ENCODE measurements at regions of chr2 and their contacts with region 1.

Region 1: DNA sequence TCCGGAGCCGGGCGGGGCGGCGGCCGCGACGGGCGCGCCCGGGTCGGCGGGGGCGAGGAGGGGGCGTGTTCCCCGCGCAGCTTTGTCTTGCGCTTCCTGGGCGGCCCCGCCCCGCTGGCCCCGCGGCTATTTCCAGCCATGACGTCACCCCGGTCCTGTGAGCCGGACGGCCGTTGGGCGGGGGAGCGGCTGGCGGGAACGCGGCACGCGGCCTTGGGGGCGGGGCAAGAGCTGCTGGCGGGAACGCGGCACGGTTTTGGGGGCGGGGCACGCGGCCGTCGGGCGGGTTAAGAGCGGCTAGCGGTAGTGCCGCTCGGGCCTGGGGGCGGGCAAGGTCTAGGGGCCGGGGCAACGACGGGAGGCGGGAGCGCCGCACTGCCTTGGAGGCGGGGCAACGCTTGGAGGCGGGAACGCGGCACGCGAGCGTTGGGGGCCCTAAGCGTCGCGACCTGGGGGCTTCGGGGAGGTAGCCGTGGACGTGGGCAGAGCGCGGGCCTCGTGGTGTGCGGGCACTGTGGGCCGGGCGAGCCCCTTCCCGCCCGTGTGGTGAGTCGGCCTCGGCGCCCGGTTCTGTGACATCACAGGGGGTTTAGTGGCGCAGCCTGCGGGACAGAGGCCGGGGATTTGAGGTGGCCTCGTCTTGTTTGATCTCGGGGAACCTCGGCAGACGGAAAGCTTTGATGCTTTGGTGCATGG is 704 bp downstream of the KLF11 start:
- DNase-seq: peak; percentile 99
- ATAC-seq: peak; percentile 48 to 83 (median 78)
- H3K4me3 ChIP-seq: peak overlapping the region; percentile 38 to 93 (median 70)
- H3K27ac ChIP-seq: peak overlapping the region; percentile 93 to 100 (median 97)
- H3K4me1 ChIP-seq: peaks cover 15 to 82% (median 64%) of the 10 kb centered on the region in 12 donors
- H3K27me3 ChIP-seq: no peaks in the 10 kb centered on the region
- CTCF ChIP-seq: no peak
- POLR2A ChIP-seq: peak in 1 of 2 donors; percentile 18

Region 2: GRCh38 chr2:9799665-9800632 is 244.1 kb before region 1 on chr2:
- intact Hi-C with region 1: loop called in 1 of 10 experiments (anchors 5 kb)
- DNase-seq: peak; percentile 84 to 94 (median 88)
- ATAC-seq: peak; percentile 78 to 89 (median 80)
- H3K4me3 ChIP-seq: peak overlapping the region in 1 of 12 donors; percentile 12
- H3K27ac ChIP-seq: peak overlapping the region in 7 of 12 donors; percentile 18 to 67 (median 33)
- H3K4me1 ChIP-seq: peaks cover 0 to 52% (median 24%) of the 10 kb centered on the region in 12 donors
- H3K27me3 ChIP-seq: no peaks in the 10 kb centered on the region
- CTCF ChIP-seq: peak; percentile 92 to 99 (median 98)
- POLR2A ChIP-seq: no peak

Region 3: DNA sequence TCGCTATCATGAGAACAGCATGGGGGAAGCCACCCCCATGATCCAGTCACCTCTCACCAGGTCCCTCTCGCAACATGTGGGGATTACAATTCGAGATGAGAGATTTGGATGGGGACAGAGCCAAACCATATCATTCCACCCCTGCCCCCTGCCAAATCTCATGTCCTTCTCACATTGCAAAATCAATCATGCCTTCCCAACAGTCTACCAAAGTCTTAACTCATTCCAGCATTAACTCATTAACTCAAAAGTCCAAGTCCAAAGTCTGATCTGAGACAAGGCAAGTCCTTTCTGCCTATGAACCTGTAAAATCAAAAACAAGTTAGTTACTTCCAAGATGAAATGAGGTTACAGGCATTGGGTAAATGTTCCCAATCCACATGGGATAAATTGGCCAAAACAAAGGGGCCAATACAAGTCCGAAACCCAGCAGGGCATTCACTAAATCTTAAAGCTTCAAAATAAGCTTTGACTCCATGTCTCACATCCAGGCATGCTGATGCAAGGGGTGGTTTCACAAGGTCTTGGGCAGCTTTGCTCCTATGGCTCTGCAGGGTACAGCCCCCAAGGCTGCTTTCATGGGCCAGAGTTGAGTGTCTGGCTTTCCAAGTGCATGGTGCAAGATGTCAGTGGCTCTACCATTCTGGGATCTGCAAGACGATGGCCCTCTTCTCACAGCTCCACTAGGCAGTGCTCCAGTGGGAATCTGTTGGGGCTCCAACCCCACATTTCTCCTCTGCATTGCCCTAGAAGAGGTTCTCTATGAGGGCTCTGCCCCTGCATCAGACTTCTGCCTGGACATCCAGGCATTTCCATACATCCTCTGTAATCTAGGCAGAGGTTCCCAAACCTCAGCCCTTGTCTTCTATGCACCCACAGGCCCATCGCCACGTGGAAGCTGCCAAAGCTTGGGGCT is 186.0 kb before region 1 on chr2:
- intact Hi-C with region 1: no loop called
- DNase-seq: no peak
- ATAC-seq: no peak
- H3K4me3 ChIP-seq: no peak overlapping the region
- H3K27ac ChIP-seq: no peak overlapping the region
- H3K4me1 ChIP-seq: no peaks in the 10 kb centered on the region
- H3K27me3 ChIP-seq: no peaks in the 10 kb centered on the region
- CTCF ChIP-seq: no peak
- POLR2A ChIP-seq: no peak

Region 4: DNA sequence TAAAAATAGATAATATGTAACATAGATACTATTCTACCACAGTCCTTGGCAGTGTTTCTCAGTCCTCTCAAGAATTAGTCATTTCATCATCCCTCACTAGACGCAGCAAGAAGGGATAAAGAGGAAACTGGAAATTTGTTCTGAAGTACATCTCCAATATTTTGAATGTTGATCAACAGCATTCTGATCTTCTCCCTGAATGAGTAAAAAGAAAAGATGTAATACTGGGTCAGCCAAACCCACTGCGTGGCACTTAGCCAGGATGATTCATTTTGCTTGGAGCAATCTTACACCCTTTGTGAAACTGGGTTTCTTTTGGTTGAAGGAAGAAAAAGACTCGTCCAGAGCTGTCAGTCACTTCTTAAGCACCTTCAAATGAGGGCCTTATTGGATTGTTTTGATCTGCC is 146.7 kb before region 1 on chr2:
- intact Hi-C with region 1: loop called in 1 of 10 experiments (anchors 5 kb)
- DNase-seq: peak; percentile 40 to 67 (median 57)
- ATAC-seq: peak in 3 of 4 donors; percentile 51 to 92 (median 60)
- H3K4me3 ChIP-seq: no peak overlapping the region
- H3K27ac ChIP-seq: peak overlapping the region in 3 of 12 donors; percentile 3 to 30 (median 11)
- H3K4me1 ChIP-seq: peaks cover 0 to 25% (median 12%) of the 10 kb centered on the region in 12 donors
- H3K27me3 ChIP-seq: no peaks in the 10 kb centered on the region
- CTCF ChIP-seq: no peak
- POLR2A ChIP-seq: no peak

Region 5: GRCh38 chr2:9984217-9984739 is 59.8 kb before region 1 on chr2:
- intact Hi-C with region 1: loop called (anchors 1 to 5 kb)
- DNase-seq: no peak
- ATAC-seq: peak; percentile 47 to 65 (median 53)
- H3K4me3 ChIP-seq: no peak overlapping the region
- H3K27ac ChIP-seq: peak overlapping the region in 3 of 12 donors; percentile 37 to 74 (median 47)
- H3K4me1 ChIP-seq: peaks cover 0 to 38% (median 18%) of the 10 kb centered on the region in 12 donors
- H3K27me3 ChIP-seq: no peaks in the 10 kb centered on the region
- CTCF ChIP-seq: peak; percentile 72 to 96 (median 86)
- POLR2A ChIP-seq: no peak

Region 6: GRCh38 chr2:10009811-10010292 is 34.2 kb before region 1 on chr2:
- intact Hi-C with region 1: loop called in 2 of 10 experiments (anchors 5 kb)
- DNase-seq: peak; percentile 82 to 95 (median 94)
- ATAC-seq: peak; percentile 79 to 85 (median 81)
- H3K4me3 ChIP-seq: no peak overlapping the region
- H3K27ac ChIP-seq: peak overlapping the region; percentile 28 to 90 (median 70)
- H3K4me1 ChIP-seq: peaks cover 6 to 44% (median 34%) of the 10 kb centered on the region in 12 donors
- H3K27me3 ChIP-seq: no peaks in the 10 kb centered on the region
- CTCF ChIP-seq: no peak
- POLR2A ChIP-seq: no peak

Measured in heart left ventricle (tissue), 16 donors.